ENCODE measurements at regions of chr13 and their contacts with region 1.

Region 1: DNA sequence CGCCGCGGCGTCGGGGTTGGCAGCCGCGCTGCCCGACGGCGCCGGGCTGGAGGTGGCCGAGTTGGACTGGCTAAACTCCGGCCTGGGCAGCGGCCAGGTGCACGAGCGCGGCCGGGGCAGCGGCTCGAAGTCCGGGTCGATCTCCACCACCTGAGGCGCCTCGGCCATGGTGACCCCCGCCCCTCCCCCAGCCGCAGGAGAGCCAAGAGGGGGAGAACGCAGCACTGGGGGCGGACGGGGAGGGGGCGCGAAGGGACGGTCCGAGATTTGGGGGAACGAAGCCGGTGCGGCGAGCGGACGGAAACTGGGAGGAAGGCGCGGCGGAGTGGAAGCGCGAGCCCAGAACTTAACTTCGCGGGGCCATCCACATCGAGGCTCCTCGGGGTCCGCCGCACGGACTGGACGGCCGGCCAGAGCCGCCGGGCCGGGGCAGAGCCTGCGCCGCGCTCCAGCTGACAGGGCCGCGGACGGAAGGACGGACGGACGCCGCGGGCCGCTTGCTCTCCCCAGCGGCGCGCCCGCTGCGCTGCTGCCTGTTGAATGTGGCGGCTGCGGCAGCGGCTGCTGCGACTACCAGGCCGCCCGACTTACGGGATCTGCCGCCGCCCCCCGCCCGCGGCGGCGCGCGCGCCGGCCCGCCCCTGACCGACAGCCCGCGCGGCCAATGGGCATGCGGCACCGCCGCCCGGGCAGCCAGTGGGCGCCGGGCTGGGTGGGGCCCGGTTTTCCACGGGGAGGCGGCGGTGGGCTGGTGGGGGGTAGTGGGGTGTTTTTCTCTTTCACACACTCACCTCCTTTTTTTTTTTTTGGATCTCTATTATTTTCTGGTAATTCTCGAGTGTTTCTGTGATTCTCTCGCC is at the start of gene FOXO1:
- DNase-seq: peak; percentile 94
- H3K4me3 ChIP-seq: peak within 1 kb of the TSS; percentile 74 to 93 (median 86)
- H3K27ac ChIP-seq: peak within 1 kb of the TSS; percentile 93 to 99 (median 98)
- H3K4me1 ChIP-seq: peaks cover 0 to 31% (median 25%) of the 10 kb centered on the region in 4 donors
- H3K27me3 ChIP-seq: no peaks in the 10 kb centered on the region
- CTCF ChIP-seq: no peak
- EP300 ChIP-seq: no peak
- POLR2A ChIP-seq: peak; percentile 14 to 24
- total RNA-seq, gene FOXO1: 30.9 to 36.8 (median 33.7) TPM

Region 2: DNA sequence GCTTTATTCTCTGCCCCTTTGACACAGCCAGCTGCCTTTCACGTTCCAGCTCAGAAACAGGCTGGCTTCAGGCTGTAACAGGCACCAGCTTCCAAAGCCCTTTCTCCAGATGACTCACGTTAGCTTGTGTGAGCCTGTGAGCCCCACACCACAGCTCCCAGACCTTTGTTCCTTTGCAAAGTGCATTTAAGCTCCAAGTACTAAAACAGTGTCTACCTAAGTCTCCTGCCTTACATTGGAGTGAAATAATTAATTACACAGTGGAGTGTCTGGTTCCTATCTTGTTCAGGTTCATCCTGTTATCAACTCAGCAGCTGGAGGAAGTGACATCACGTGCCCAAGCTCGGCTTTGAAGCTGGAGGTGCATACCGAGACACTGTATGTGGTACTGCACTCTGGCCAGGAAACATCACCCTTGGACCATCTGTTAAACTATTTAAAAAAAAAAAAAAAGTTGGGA is 475.6 kb before region 1 on chr13:
- intact Hi-C with region 1: loop called (anchors 5 kb)
- DNase-seq: peak; percentile 74
- H3K4me3 ChIP-seq: no peak overlapping the region
- H3K27ac ChIP-seq: peak overlapping the region; percentile 69 to 79 (median 72)
- H3K4me1 ChIP-seq: peaks cover 0 to 68% (median 58%) of the 10 kb centered on the region in 4 donors
- H3K27me3 ChIP-seq: no peaks in the 10 kb centered on the region
- CTCF ChIP-seq: no peak
- EP300 ChIP-seq: peak in 1 of 4 donors; percentile 13
- POLR2A ChIP-seq: no peak

Region 3: GRCh38 chr13:40401911-40402776 is 264.1 kb before region 1 on chr13:
- intact Hi-C with region 1: loop called (anchors 2 kb)
- DNase-seq: peak; percentile 99
- H3K4me3 ChIP-seq: peak overlapping the region in 2 of 4 donors; percentile 22 to 27
- H3K27ac ChIP-seq: peak overlapping the region; percentile 80 to 86 (median 83)
- H3K4me1 ChIP-seq: peaks cover 0 to 58% (median 47%) of the 10 kb centered on the region in 4 donors
- H3K27me3 ChIP-seq: no peaks in the 10 kb centered on the region
- CTCF ChIP-seq: no peak
- EP300 ChIP-seq: peak in 1 of 4 donors; percentile 4
- POLR2A ChIP-seq: no peak

Region 4: GRCh38 chr13:40440990-40441820 is 225.1 kb before region 1 on chr13:
- intact Hi-C with region 1: loop called (anchors 5 kb)
- DNase-seq: peak; percentile 92
- H3K4me3 ChIP-seq: no peak overlapping the region
- H3K27ac ChIP-seq: peak overlapping the region; percentile 73 to 82 (median 78)
- H3K4me1 ChIP-seq: peaks cover 0 to 49% (median 46%) of the 10 kb centered on the region in 4 donors
- H3K27me3 ChIP-seq: no peaks in the 10 kb centered on the region
- CTCF ChIP-seq: no peak
- EP300 ChIP-seq: no peak
- POLR2A ChIP-seq: no peak

Region 5: DNA sequence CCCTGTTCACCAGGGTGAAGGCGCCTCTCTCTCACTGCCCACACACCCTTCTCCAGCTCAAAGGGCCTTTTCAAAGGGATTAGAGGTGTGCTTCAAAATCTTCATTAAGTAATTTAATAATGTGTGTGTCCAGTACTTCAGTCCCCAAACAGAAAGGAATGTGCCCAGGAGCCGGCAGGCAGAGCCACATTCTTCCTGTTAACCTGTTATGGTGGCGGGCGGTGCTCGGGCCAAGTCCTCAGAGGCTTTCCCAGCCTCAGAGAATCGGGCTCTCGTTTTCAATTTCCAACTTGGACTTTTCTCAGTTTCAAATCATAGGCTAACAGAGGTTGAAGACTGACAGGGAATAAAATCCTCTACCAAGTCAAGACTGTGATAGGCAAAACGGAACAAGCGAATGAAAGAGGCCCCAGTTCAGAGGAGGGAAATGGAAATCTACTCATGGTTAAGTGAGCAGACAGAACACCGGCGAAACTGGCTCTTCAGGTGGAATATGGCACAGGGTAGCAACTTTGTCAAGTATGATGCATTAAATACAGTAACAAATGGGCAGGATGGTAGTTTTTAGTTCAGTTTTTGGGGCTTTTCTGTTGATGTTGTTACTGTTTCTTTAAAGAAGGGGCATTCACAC is 68.4 kb before region 1 on chr13:
- intact Hi-C with region 1: loop called (anchors 2 kb)
- DNase-seq: no peak
- H3K4me3 ChIP-seq: no peak overlapping the region
- H3K27ac ChIP-seq: peak overlapping the region; percentile 28 to 63 (median 50)
- H3K4me1 ChIP-seq: peaks cover 0 to 78% (median 65%) of the 10 kb centered on the region in 4 donors
- H3K27me3 ChIP-seq: no peaks in the 10 kb centered on the region
- CTCF ChIP-seq: no peak
- EP300 ChIP-seq: no peak
- POLR2A ChIP-seq: no peak

Region 6: GRCh38 chr13:41085961-41086585 is 419.8 kb after region 1 on chr13:
- intact Hi-C with region 1: no loop called
- DNase-seq: no peak
- H3K4me3 ChIP-seq: no peak overlapping the region
- H3K27ac ChIP-seq: no peak overlapping the region
- H3K4me1 ChIP-seq: no peaks in the 10 kb centered on the region
- H3K27me3 ChIP-seq: no peaks in the 10 kb centered on the region
- CTCF ChIP-seq: no peak
- EP300 ChIP-seq: no peak
- POLR2A ChIP-seq: no peak

Region 7: DNA sequence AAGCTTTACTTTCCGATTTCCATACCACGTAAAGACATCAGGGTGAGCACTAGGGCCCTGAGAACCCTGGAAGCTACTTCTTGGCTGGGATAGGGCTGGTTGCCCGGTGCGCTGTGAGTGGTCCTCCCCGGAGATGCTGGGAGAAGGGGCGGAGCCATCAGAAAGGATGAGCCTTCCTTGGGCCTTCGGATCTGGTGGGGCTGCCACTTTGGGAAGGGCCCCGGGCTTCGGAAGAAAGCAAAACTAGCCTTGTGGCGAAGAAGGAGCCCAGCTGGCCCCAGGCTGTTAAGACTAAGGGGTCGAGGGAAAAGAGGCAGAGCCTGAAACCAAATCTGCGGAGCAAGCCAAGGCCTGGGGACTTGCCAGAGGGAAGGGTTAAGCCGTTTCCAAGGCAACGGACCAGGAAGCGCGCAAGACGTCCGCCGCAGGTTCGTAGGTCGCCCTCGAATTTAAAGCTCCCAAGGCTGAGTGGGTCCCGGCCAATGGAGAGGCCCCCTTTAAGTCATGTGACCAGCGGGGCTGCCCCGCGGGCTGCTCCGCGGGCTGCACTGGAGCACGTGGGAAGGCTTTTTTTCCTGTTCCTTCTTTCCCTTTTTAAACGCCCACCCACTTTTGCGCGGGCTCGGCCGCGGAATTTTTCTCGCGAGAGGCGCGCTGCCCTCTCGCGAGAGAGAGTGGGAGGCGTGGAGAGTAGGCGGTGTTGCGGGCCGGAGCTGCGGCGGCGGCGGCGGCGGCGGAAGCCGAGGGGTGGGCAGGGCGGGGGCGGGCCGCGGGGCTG is 1605.3 kb after region 1 on chr13:
- intact Hi-C with region 1: loop called (anchors 10 kb)
- DNase-seq: peak; percentile 98
- H3K4me3 ChIP-seq: peak overlapping the region; percentile 83 to 97 (median 90)
- H3K27ac ChIP-seq: peak overlapping the region; percentile 92 to 95 (median 93)
- H3K4me1 ChIP-seq: peaks cover 0 to 34% (median 17%) of the 10 kb centered on the region in 4 donors
- H3K27me3 ChIP-seq: no peaks in the 10 kb centered on the region
- CTCF ChIP-seq: no peak
- EP300 ChIP-seq: peak in 1 of 4 donors; percentile 2
- POLR2A ChIP-seq: no peak

Measured in sigmoid colon (tissue), 7 donors.